Calu3 (cell line): ENCODE measurements at regions of chr17 and their contacts with region 1.

Region 1: GRCh38 chr17:27760069-27760885 is 40.1 kb downstream of the NOS2 start:
- DNase-seq: peak; percentile 75
- H3K4me3 Mint-ChIP-seq: no peak overlapping the region
- H3K27ac Mint-ChIP-seq: no peak overlapping the region
- H3K4me1 Mint-ChIP-seq: no peaks in the 10 kb centered on the region
- H3K27me3 Mint-ChIP-seq: peaks cover 52% of the 10 kb centered on the region
- CTCF ChIP-seq: peak; percentile 90

Region 2: GRCh38 chr17:27609611-27610303 is 150.5 kb before region 1 on chr17:
- CTCF ChIA-PET with region 1: interaction called, 4 read pairs
- intact Hi-C with region 1: loop called (anchors 5 kb)
- DNase-seq: peak; percentile 62
- H3K4me3 Mint-ChIP-seq: no peak overlapping the region
- H3K27ac Mint-ChIP-seq: no peak overlapping the region
- H3K4me1 Mint-ChIP-seq: no peaks in the 10 kb centered on the region
- H3K27me3 Mint-ChIP-seq: no peaks in the 10 kb centered on the region
- CTCF ChIP-seq: peak; percentile 75

Region 3: DNA sequence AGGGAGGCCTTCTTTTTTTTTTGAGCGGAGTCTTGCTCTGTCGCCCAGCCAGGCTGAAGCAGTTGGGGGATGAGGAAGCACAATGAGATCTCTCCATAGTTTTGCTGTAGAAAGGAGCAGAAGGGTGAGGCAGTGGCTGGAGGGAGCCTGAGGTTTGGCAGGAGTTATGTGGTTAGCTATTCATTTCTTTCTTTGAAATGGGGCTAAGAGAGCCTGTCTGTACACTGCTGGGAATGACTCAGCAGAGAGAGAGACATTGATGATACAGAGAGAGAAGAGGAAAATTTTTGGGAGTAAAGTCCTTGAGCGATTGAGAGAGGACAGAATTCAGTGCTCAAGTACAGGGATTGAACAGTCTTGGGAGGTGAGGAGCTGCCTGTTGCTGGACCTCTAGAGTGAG is 17.9 kb after region 1 on chr17:
- CTCF ChIA-PET with region 1: no interaction called
- intact Hi-C with region 1: no loop called
- DNase-seq: no peak
- H3K4me3 Mint-ChIP-seq: no peak overlapping the region
- H3K27ac Mint-ChIP-seq: no peak overlapping the region
- H3K4me1 Mint-ChIP-seq: no peaks in the 10 kb centered on the region
- H3K27me3 Mint-ChIP-seq: peaks cover 58% of the 10 kb centered on the region
- CTCF ChIP-seq: no peak

Region 4: GRCh38 chr17:27879987-27880608 is 119.8 kb after region 1 on chr17:
- CTCF ChIA-PET with region 1: interaction called, 38 read pairs
- intact Hi-C with region 1: loop called (anchors 1 kb)
- DNase-seq: peak; percentile 80
- H3K4me3 Mint-ChIP-seq: no peak overlapping the region
- H3K27ac Mint-ChIP-seq: no peak overlapping the region
- H3K4me1 Mint-ChIP-seq: no peaks in the 10 kb centered on the region
- H3K27me3 Mint-ChIP-seq: peaks cover 32% of the 10 kb centered on the region
- CTCF ChIP-seq: peak; percentile 76